Gastrocnemius medialis (tissue), 4 donors: ENCODE measurements at regions of chr12 and their contacts with region 1.

Region 1: GRCh38 chr12:46831335-46832129 is 5.7 kb upstream of the SLC38A4 start:
- DNase-seq: peak; percentile 70 to 88
- ATAC-seq: peak; percentile 84 to 88
- H3K4me3 ChIP-seq: peak overlapping the region; percentile 63 to 75 (median 70)
- H3K27ac ChIP-seq: peak overlapping the region; percentile 88 to 95 (median 92)
- H3K4me1 ChIP-seq: peaks cover 9 to 13% of the 10 kb centered on the region in 2 donors
- H3K27me3 ChIP-seq: no peaks in the 10 kb centered on the region
- CTCF ChIP-seq: no peak
- POLR2A ChIP-seq: peak in 1 of 2 donors; percentile 71

Region 2: GRCh38 chr12:46722394-46723185 is 108.9 kb before region 1 on chr12:
- in situ Hi-C with region 1: no loop called
- intact Hi-C with region 1: no loop called
- DNase-seq: no peak
- ATAC-seq: no peak
- H3K4me3 ChIP-seq: no peak overlapping the region
- H3K27ac ChIP-seq: no peak overlapping the region
- H3K4me1 ChIP-seq: peaks cover 8 to 17% of the 10 kb centered on the region in 2 donors
- H3K27me3 ChIP-seq: no peaks in the 10 kb centered on the region
- CTCF ChIP-seq: no peak
- POLR2A ChIP-seq: no peak

Region 3: DNA sequence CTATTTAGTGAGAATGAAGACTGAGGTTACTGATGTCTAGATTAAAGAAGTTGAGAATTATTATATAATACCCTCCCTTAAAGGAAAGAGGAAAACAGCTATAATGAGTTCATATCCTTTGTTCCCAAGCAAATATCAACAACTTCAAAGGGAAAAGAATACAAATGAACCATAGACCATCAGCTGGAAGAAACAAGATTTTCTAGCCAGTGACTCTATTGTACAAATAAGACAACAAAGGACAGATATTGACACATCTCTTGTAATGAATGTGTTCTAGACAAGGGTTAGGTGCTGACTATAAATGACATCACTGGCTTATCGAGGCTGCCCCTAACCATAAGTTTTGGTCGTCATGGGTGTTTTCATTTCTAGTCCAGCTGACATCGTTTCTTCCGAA is 53.9 kb before region 1 on chr12:
- in situ Hi-C with region 1: loop called in 1 of 4 experiments (anchors 5 kb)
- intact Hi-C with region 1: loop called (anchors 2 kb)
- DNase-seq: no peak
- ATAC-seq: no peak
- H3K4me3 ChIP-seq: no peak overlapping the region
- H3K27ac ChIP-seq: peak overlapping the region; percentile 85 to 90 (median 88)
- H3K4me1 ChIP-seq: peaks cover 38 to 53% of the 10 kb centered on the region in 2 donors
- H3K27me3 ChIP-seq: no peaks in the 10 kb centered on the region
- CTCF ChIP-seq: no peak
- POLR2A ChIP-seq: no peak

Region 4: GRCh38 chr12:46891306-46891705 is 59.8 kb after region 1 on chr12:
- in situ Hi-C with region 1: no loop called
- intact Hi-C with region 1: loop called (anchors 5 kb)
- DNase-seq: peak; percentile 53
- ATAC-seq: peak; percentile 84 to 88
- H3K4me3 ChIP-seq: no peak overlapping the region
- H3K27ac ChIP-seq: peak overlapping the region; percentile 70 to 85 (median 74)
- H3K4me1 ChIP-seq: peaks cover 27 to 29% of the 10 kb centered on the region in 2 donors
- H3K27me3 ChIP-seq: no peaks in the 10 kb centered on the region
- CTCF ChIP-seq: no peak
- POLR2A ChIP-seq: no peak

Region 5: GRCh38 chr12:46915082-46915481 is 83.5 kb after region 1 on chr12:
- in situ Hi-C with region 1: loop called in 1 of 4 experiments (anchors 10 kb)
- intact Hi-C with region 1: no loop called
- DNase-seq: peak; percentile 92 to 96
- ATAC-seq: peak; percentile 99
- H3K4me3 ChIP-seq: no peak overlapping the region
- H3K27ac ChIP-seq: peak overlapping the region; percentile 71 to 82 (median 76)
- H3K4me1 ChIP-seq: peaks cover 16 to 27% of the 10 kb centered on the region in 2 donors
- H3K27me3 ChIP-seq: no peaks in the 10 kb centered on the region
- CTCF ChIP-seq: no peak
- POLR2A ChIP-seq: no peak